Ascending aorta (tissue), 2 donors: ENCODE measurements at regions of chr16 and their contacts with region 1.

Region 1: GRCh38 chr16:81737885-81738786 is 41.0 kb upstream of the PLCG2 start:
- DNase-seq: peak in 1 of 2 donors; percentile 86
- H3K4me3 ChIP-seq: peak overlapping the region; percentile 6 to 38
- H3K27ac ChIP-seq: no peak overlapping the region
- H3K4me1 ChIP-seq: peaks cover 0 to 4% of the 10 kb centered on the region in 2 donors
- H3K27me3 ChIP-seq: no peaks in the 10 kb centered on the region
- CTCF ChIP-seq: peak; percentile 66 to 72 (median 69)

Region 2: GRCh38 chr16:81035398-81035974 is 702.6 kb before region 1 on chr16 and contains the start of gene ATMIN:
- intact Hi-C with region 1: loop called (anchors 5 kb)
- DNase-seq: peak; percentile 25 to 90
- H3K4me3 ChIP-seq: peak within 1 kb of the TSS; percentile 90 to 93
- H3K27ac ChIP-seq: peak within 1 kb of the TSS in 1 of 2 donors; percentile 52
- H3K4me1 ChIP-seq: peaks cover 0 to 9% of the 10 kb centered on the region in 2 donors
- H3K27me3 ChIP-seq: no peaks in the 10 kb centered on the region
- CTCF ChIP-seq: peak; percentile 90 to 97 (median 90)
- total RNA-seq, gene ATMIN: 11.9 TPM

Region 3: DNA sequence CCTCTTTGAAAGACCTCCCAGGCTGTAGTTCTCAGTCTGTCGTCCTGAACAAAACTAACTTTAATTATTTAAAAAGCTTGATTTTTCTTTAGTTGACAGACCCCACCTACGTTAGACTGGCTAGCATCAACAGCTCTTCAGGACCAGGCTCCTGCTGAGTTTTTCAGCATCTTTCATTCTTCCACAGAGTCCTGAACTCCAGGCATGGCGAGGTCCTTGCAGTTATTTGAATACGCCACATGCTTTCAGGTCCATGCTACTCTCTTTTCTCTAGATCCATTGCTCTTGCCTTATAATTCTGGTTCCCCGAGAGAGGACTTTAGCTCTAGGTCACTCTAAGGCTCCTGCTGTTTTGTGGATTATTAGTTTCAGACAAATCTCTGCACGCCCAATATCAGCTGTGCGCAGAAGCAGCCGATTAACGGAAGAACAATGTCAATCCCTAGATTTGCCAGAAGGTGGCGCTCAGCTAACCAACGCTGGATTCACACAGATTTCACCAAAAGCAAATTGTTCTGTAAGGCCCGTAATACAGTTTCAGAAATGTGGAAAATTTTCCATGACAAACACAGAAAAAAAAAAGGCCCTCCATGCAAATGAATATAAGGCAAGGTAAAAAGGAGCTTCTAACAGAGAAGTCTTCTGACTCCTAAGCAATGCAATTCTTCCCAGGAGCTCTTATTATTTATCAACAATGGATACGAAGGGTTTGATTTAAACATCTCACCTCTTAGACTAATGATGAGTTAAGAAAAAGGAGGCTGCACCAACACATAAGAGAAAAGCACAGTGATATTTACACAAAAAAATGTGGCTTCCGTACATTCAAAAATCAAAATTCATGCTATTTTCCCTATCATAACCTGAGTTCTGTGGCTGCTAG is 533.1 kb before region 1 on chr16:
- intact Hi-C with region 1: loop called (anchors 10 kb)
- DNase-seq: no peak
- H3K4me3 ChIP-seq: no peak overlapping the region
- H3K27ac ChIP-seq: no peak overlapping the region
- H3K4me1 ChIP-seq: no peaks in the 10 kb centered on the region
- H3K27me3 ChIP-seq: no peaks in the 10 kb centered on the region
- CTCF ChIP-seq: peak; percentile 4 to 62 (median 58)

Region 4: DNA sequence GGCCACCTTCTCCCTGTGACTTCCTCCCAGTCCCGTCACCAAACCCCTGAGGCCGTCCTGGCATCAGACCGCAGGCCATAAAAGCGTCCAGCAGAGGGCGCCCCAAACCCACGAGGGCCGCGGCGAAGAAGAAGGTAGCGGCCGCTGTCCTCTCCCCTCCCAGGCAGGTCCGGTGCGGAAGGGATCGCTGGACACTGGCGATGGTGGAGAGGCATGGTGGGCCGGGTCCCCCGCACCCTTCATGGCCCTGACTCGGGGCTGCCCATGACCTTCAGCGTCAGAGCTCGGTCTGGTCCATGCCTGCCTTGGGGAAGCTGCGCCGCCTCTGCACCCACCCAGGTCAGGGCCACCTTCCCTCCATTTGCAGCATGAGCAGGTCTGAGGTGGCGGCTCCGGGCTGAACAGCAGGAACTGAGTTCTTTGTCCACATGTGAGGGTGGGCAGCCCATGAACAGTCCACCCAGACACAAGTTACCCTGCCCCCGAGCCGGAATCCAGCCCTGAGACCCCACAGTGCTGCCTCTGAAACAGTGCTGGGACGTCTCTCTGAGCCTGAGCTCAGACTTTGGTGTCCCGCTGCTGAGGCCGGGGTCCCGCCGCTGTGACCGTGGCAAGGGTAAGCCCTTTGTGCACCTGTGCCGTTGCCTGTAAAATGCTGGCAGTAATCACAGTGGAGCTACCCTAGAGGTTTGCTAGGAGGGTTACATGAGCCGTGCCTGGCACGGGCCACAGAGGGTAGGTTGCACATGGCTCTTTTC is 334.3 kb before region 1 on chr16:
- intact Hi-C with region 1: loop called (anchors 1 kb)
- DNase-seq: peak; percentile 26 to 90
- H3K4me3 ChIP-seq: peak overlapping the region; percentile 17 to 40
- H3K27ac ChIP-seq: no peak overlapping the region
- H3K4me1 ChIP-seq: peaks cover 0 to 4% of the 10 kb centered on the region in 2 donors
- H3K27me3 ChIP-seq: no peaks in the 10 kb centered on the region
- CTCF ChIP-seq: peak; percentile 92 to 98 (median 93)

Region 5: DNA sequence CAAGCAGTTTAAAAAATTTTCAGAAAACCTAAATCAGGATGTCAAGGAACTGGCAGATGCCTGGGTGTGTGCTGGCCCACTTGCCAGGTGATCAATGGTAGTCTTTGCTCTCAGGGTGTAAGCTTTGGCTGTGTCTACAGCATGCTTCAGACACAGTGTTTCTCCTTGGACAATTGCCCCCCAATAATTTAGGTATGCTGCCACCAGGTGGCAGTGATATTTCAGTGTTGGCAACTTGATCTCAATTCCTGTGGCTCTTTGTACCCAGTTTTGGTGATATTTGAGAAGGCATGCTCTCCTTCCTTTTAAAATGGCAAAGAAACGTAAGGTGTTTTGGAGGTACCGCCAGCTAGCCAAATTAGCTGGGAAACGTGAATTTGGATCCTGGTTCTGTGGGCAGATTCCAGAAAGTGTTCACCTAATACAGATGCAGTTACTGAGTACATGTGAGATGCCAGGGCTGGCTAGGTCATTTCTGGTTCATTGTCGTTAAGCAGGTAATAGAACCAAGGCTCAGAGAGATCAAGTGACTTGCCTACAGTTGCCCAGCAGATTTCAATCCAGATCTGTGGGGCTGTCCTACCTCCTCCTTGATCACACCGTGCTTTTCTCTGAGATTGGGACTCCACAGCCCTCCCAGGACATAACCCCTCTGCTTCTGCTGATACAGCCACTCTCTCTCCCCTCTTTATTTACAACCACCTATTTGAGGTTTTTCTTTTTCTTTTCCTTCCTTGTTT is 114.6 kb before region 1 on chr16:
- intact Hi-C with region 1: no loop called
- DNase-seq: no peak
- H3K4me3 ChIP-seq: no peak overlapping the region
- H3K27ac ChIP-seq: no peak overlapping the region
- H3K4me1 ChIP-seq: peaks cover 2 to 8% of the 10 kb centered on the region in 2 donors
- H3K27me3 ChIP-seq: no peaks in the 10 kb centered on the region
- CTCF ChIP-seq: peak in 2 of 3 experiments; percentile 13 to 33